ENCODE measurements at regions of chr11 and their contacts with region 1.

Region 1: GRCh38 chr11:75814686-75815344 is at the start of gene UVRAG:
- H3K4me3 Mint-ChIP-seq: no peak within 1 kb of the TSS
- H3K27ac Mint-ChIP-seq: no peak within 1 kb of the TSS
- H3K4me1 Mint-ChIP-seq: peaks cover 52% of the 10 kb centered on the region
- H3K27me3 Mint-ChIP-seq: no peaks in the 10 kb centered on the region

Region 2: DNA sequence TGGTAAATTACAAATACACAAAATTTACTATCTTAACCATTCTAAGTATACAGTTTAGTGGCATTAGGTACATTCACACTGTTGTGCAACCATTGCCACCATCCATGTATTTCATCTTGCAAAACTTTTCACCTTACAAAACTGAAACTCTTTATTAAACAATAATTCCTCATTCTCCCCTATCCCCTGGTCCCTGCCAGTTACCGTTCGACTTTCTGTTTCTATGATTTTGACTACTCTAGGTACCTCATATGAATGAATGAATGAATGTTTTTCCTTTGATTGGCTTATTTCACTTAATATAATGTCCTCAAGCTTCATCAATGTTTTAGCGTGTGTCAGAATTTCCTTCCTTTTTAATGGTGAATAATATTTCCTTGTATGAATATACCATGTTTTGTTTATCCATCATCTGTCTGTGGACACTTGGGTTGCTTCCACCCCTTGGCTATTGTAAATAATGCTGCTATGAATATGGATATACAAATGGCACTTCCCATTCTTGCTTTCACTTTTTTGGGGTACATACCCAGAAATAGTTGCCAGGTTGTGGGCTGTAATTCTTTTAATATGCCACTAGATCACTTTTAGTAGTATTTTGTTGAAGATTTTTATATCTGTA is 93.2 kb after region 1 on chr11:
- intact Hi-C with region 1: no loop called
- H3K4me3 Mint-ChIP-seq: no peak overlapping the region
- H3K27ac Mint-ChIP-seq: no peak overlapping the region
- H3K4me1 Mint-ChIP-seq: peaks cover 37% of the 10 kb centered on the region
- H3K27me3 Mint-ChIP-seq: no peaks in the 10 kb centered on the region

Region 3: GRCh38 chr11:76120513-76121101 is 305.8 kb after region 1 on chr11:
- intact Hi-C with region 1: loop called (anchors 10 kb)
- H3K4me3 Mint-ChIP-seq: no peak overlapping the region
- H3K27ac Mint-ChIP-seq: no peak overlapping the region
- H3K4me1 Mint-ChIP-seq: peaks cover 27% of the 10 kb centered on the region
- H3K27me3 Mint-ChIP-seq: no peaks in the 10 kb centered on the region